ENCODE measurements at regions of chr1 and their contacts with region 1.

Region 1: GRCh38 chr1:84422909-84423308 is 24.6 kb downstream of the DNASE2B start:
- DNase-seq: no peak
- H3K4me3 ChIP-seq: no peak overlapping the region
- H3K27ac ChIP-seq: no peak overlapping the region
- H3K4me1 ChIP-seq: peaks cover 0 to 13% of the 10 kb centered on the region in 2 donors
- H3K27me3 ChIP-seq: no peaks in the 10 kb centered on the region
- CTCF ChIP-seq: no peak
- POLR2A ChIP-seq: no peak

Region 2: GRCh38 chr1:84089470-84090266 is 333.2 kb before region 1 on chr1:
- intact Hi-C with region 1: no loop called
- DNase-seq: no peak
- H3K4me3 ChIP-seq: no peak overlapping the region
- H3K27ac ChIP-seq: no peak overlapping the region
- H3K4me1 ChIP-seq: no peaks in the 10 kb centered on the region
- H3K27me3 ChIP-seq: no peaks in the 10 kb centered on the region
- CTCF ChIP-seq: no peak
- POLR2A ChIP-seq: no peak

Region 3: DNA sequence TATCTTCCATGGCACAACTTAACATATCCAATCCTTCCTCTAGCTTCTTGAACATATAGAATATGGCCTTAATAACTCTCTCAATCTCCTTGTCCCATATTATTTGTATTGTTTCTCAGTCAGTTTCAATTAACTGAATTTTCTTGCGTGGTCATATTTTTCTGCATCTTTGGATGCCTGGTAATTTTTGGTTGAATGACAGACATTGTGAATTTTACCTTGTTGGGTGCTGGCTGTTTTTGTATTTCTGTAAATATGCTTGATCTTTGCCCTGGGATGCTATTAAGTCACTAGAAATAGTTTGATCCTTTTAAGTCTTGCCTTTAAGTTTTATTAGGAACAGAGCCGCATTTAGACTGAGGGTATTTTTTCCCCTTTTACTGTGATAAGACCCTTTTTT is 115.5 kb before region 1 on chr1:
- intact Hi-C with region 1: loop called in 1 of 2 experiments (anchors 5 kb)
- DNase-seq: no peak
- H3K4me3 ChIP-seq: no peak overlapping the region
- H3K27ac ChIP-seq: no peak overlapping the region
- H3K4me1 ChIP-seq: peaks cover 0 to 6% of the 10 kb centered on the region in 2 donors
- H3K27me3 ChIP-seq: no peaks in the 10 kb centered on the region
- CTCF ChIP-seq: no peak
- POLR2A ChIP-seq: no peak

Region 4: DNA sequence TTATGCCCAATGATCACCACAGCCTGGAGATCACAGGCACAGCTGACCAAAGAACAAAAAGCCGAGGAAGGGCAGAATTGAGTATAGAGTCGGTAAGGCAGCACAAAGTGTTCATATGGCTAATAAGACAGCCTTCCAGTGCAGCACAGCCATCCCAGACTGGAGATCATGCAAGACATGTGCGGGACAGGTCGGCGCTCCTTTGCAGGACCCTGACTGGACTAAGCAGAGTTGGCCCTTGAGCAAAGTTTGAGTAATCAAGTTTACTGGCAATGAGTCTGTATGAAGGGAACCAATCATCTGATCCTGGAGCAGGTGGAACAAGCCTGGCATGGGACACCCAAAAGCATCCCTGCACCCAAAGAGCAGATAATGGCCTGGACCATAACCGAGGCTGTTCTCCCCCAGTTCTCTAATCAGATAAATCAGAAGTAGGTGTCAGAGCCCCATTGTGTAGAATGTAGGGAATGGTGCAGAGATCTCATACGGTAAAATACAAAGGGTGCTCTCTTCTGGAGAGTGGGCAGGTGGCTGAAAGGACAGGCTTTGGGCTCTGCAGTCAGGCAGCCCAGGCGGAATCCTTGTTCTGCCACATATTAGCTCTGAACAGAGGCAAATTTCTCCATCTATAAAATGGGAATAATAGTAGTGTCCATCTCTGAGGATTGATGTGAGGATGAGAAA is 35.3 kb before region 1 on chr1:
- intact Hi-C with region 1: no loop called
- DNase-seq: no peak
- H3K4me3 ChIP-seq: no peak overlapping the region
- H3K27ac ChIP-seq: no peak overlapping the region
- H3K4me1 ChIP-seq: no peaks in the 10 kb centered on the region
- H3K27me3 ChIP-seq: no peaks in the 10 kb centered on the region
- CTCF ChIP-seq: peak in 1 of 6 experiments; percentile 8
- POLR2A ChIP-seq: no peak

Region 5: GRCh38 chr1:84899969-84900368 is 477.1 kb after region 1 on chr1:
- intact Hi-C with region 1: no loop called
- DNase-seq: no peak
- H3K4me3 ChIP-seq: no peak overlapping the region
- H3K27ac ChIP-seq: no peak overlapping the region
- H3K4me1 ChIP-seq: no peaks in the 10 kb centered on the region
- H3K27me3 ChIP-seq: peaks cover 3% of the 10 kb centered on the region
- CTCF ChIP-seq: no peak
- POLR2A ChIP-seq: no peak

Measured in adrenal gland (tissue), 19 donors.